ENCODE measurements at regions of chr18 and their contacts with region 1.

Region 1: DNA sequence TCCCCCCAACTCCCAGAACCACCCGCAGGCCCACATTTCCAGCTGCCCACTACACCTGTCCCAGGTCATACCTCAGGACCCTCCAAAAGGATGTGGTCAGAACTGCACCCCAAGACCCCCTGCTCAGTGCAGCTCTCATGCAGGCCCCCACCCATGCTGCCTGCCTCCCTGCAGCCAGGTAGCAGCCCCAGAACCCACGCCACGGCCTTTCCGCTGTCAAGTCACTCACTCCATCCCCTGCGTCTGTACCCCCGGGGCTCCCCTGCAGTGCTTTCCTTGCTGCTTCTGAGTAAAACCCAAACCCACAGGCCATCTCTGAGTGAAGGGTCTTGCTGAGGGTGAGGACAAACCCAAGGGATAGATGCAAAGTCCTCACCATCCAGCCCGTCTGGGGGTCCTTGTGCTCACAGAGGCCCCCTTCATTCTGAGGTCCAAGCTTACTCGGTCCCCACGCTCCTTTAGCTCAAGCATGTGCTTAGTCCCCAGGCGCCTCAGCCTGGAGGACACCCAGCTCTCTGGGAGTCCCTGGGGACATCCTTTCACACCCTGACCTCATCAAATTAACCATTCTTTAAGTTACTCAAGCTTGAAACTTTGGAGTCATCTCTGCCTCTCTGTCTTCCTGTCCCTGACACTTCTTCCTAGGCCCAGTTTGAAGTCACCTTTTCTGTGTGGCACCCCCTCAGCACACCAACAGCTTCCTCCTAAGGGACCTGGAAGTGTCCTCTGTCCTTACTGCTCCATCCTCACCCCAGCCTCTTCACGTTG is 130.1 kb downstream of the SMAD7 start:
- DNase-seq: peak; percentile 93
- ATAC-seq: peak; percentile 95
- H3K4me3 ChIP-seq: no peak overlapping the region
- H3K27ac ChIP-seq: peak overlapping the region; percentile 60
- H3K4me1 ChIP-seq: peaks cover 20% of the 10 kb centered on the region
- H3K27me3 ChIP-seq: no peaks in the 10 kb centered on the region
- CTCF ChIP-seq: no peak
- EP300 ChIP-seq: peak; percentile 51 to 83
- POLR2A ChIP-seq: no peak
- RAD21 ChIP-seq: peak; percentile 9; the same call in 1 of the 2 replicates

Region 2: GRCh38 chr18:48800876-48801727 is 19.6 kb before region 1 on chr18:
- CTCF ChIA-PET with region 1: interaction called, 13 read pairs
- POLR2A ChIA-PET with region 1: interaction called, 25 read pairs
- RAD21 ChIA-PET with region 1: interaction called, 61 read pairs
- SMC1A ChIA-PET with region 1: interaction called, 47 read pairs
- in situ Hi-C with region 1: no loop called
- intact Hi-C with region 1: no loop called
- DNase-seq: peak; percentile 89
- ATAC-seq: peak; percentile 87
- H3K4me3 ChIP-seq: peak overlapping the region; percentile 36; the same call in 1 of the 2 replicates
- H3K27ac ChIP-seq: peak overlapping the region; percentile 92
- H3K4me1 ChIP-seq: peaks cover 52% of the 10 kb centered on the region
- H3K27me3 ChIP-seq: no peaks in the 10 kb centered on the region
- CTCF ChIP-seq: no peak
- EP300 ChIP-seq: peak; percentile 87 to 93
- POLR2A ChIP-seq: peak; percentile 60; the same call in 1 of the 2 replicates
- RAD21 ChIP-seq: no peak

Region 3: DNA sequence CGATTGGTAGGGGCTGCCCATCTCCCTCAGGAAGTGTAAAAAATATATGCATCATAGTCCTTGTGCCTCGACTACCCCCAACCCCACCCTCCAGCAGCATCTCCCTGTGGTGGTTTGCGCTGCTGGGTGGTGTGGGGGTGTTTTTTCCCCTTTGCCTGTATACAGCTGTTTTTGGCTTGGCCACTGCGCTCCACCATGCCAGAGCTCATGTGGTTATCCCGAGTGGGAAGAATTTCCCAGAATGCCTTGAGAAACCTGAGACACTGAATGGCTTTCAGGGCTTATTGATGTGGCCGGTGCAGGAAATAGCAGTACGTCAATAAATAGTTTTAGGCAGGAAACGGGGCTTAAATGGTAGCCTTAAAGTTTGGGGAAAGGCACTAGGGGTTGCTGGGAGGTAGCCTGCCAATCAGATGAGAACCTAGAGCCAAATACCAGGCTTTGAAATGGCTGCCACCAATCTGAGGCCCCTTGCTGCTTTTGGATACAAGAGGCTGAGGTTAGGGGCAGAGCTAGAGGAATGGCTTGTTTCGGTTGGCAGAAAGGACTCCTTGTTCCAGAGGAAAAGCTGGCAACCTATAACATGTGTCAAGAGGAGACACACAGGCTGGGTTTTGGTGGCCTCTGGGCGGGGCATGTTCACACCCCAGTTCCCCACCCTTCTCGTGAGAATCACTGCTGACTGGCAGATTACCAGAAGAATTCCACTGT is 14.0 kb before region 1 on chr18:
- CTCF ChIA-PET with region 1: interaction called, 17 read pairs
- POLR2A ChIA-PET with region 1: interaction called, 25 read pairs
- RAD21 ChIA-PET with region 1: interaction called, 61 read pairs
- SMC1A ChIA-PET with region 1: interaction called, 47 read pairs
- in situ Hi-C with region 1: no loop called
- intact Hi-C with region 1: no loop called
- DNase-seq: no peak
- ATAC-seq: peak; percentile 55
- H3K4me3 ChIP-seq: no peak overlapping the region
- H3K27ac ChIP-seq: peak overlapping the region; percentile 53
- H3K4me1 ChIP-seq: peaks cover 34% of the 10 kb centered on the region
- H3K27me3 ChIP-seq: no peaks in the 10 kb centered on the region
- CTCF ChIP-seq: no peak
- EP300 ChIP-seq: no peak
- POLR2A ChIP-seq: no peak
- RAD21 ChIP-seq: no peak

Region 4: GRCh38 chr18:48851599-48851960 is 30.9 kb after region 1 on chr18:
- CTCF ChIA-PET with region 1: no interaction called
- POLR2A ChIA-PET with region 1: interaction called, 10 read pairs
- RAD21 ChIA-PET with region 1: no interaction called
- SMC1A ChIA-PET with region 1: interaction called, 4 read pairs
- in situ Hi-C with region 1: no loop called
- intact Hi-C with region 1: no loop called
- DNase-seq: no peak
- ATAC-seq: no peak
- H3K4me3 ChIP-seq: no peak overlapping the region
- H3K27ac ChIP-seq: no peak overlapping the region
- H3K4me1 ChIP-seq: peaks cover 2% of the 10 kb centered on the region; the same call in 1 of the 2 replicates
- H3K27me3 ChIP-seq: no peaks in the 10 kb centered on the region
- CTCF ChIP-seq: no peak
- EP300 ChIP-seq: no peak
- POLR2A ChIP-seq: no peak
- RAD21 ChIP-seq: no peak

Region 5: DNA sequence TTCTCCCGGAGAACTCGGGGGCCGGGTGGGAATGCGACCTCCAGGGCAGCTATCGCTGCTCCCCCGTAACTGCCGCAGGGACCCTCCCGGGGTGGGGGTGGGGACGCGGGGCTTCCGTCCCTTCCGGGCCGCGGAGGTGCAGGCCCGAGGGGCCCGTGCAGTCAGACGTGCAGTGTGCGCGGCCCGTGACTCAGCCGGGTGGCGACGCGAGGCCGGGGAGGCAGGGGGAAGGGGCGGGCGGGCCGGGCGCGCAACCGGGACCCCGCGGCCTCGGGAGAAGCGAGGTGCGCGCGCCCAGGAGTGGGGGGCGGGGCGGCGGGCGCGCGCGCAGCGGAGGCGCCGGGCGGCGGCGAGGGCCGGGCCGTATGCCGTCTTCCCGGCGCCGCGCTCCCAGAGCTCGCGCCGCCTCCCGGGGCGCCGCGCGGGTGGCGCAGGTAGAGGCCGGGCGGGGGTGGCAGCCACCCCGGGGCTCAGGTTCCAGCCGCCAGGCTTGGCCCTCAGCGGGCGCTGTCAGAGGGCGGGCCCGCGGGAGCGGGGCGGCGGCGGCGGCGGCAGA is 155.1 kb after region 1 on chr18:
- CTCF ChIA-PET with region 1: no interaction called
- POLR2A ChIA-PET with region 1: no interaction called
- RAD21 ChIA-PET with region 1: no interaction called
- SMC1A ChIA-PET with region 1: no interaction called
- in situ Hi-C with region 1: no loop called
- intact Hi-C with region 1: no loop called
- DNase-seq: no peak
- ATAC-seq: peak; percentile 77
- H3K4me3 ChIP-seq: peak overlapping the region; percentile 73; the same call in 1 of the 2 replicates
- H3K27ac ChIP-seq: no peak overlapping the region
- H3K4me1 ChIP-seq: 0 out of 2 replicates have a peak, but pooled peaks cover 4% of the 10 kb centered on the region
- H3K27me3 ChIP-seq: peaks cover 0 to 1% of the 10 kb centered on the region in 2 experiments; a peak in 2 of 4 replicates
- CTCF ChIP-seq: no peak
- EP300 ChIP-seq: no peak
- POLR2A ChIP-seq: peak; percentile 63
- RAD21 ChIP-seq: no peak